GM10248 (cell line): ENCODE measurements at regions of chrX and their contacts with region 1.

Region 1: DNA sequence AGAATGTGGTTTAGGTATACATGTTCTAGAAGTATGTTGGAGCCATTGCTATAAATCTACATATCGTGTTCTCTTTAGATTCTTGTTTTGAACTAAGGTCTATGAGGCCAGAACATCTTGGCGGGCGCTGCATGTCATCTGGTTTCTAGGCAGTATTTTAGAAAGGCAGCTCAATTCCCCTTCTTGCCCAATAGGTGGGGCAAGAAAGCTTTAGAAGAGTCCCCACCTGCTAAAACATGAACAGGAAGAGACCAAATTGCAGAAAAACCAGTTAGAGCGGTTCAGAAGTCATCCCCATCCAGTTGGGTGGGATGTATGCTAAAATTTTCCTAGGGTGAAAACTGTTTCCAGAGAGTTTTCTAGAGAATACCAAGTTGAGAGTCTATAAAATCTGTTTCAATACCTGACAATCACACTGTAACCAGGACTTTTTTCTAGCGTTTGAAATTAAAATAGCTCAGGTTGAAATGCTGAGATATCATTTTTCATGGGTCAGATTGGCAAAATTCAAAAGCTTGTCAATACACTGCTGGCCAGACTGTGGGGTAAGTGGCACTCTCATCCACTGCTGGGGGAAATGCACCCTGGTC is 17.5 kb upstream of the SH3KBP1 start:
- DNase-seq: peak; percentile 62
- CTCF ChIP-seq: peak; percentile 59

Region 2: DNA sequence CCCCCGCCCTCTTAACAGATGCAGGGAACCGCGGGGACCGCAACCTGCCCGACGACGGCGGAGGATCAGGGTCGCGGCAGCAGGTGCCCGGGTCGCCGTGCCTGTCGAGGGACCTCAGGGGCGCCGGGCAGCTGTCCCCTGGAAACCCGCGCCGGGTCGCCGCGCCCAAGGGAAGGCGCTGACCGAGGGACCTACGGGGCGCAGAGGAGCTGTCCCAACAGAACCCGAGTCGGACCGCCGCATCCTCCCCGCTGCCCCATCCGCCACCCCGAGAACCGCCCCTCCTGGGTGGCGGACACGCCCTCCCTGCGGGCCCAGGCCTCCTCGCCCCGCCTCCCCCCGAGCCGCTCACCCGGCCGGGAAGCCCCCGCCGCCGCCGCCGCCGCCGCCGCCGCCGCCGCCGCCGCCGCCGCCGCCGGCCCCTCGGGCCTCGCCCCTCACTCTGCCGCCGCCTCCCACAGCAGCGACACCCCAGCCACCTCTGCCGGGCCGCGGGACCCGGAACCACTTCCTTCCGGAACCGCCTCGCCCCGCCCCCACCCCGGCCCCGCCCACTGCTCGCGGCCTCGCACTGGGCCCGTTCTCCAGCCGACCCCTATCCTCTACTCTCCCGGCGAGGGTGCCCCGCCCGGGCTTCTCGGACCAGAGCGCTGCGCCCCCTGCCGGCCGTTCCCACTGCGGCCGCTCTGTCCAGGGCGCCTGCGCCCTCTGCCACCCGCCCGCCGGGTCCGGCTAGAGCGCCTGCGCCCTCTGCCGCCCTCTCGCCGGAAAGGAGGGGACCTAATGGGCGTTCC is 85.9 kb after region 1 on chrX and contains the start of gene BCLAF3:
- CTCF ChIA-PET with region 1: interaction called, 23 read pairs
- POLR2A ChIA-PET with region 1: no interaction called
- DNase-seq: peak; percentile 92
- CTCF ChIP-seq: peak; percentile 81

Region 3: DNA sequence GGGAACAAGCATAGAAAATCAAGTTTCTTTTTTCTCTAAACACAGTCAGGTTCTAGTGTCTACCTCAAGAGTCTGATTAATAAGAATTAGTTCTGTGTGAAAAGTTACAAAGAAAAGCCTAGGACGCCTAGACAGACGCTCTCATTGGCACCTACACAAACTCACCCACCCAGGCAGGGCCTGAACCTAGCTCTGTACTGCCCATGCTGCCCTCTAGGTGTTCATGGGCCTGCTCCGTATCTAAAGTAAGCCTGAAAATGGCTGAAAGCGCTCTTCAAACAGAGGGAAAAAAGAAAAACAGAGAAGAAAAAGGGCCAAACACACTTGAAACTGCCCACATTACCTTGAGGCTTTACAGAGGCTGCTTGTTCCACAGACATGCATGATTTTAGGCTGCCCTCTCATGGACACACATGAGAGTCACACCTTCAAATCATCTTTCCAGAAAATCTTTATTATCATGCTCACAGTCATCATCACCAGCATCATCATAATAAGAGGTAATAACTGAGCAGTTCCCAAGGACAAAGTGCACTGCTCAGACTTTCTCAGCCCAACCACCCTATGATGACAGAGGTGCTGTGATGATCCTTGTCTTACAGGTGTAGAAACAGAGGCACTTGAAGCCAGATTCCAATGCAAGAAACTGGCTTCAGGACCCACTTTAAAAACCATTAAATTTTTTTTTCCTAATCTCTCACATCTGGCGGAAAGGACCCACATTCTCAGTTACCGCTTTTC is 162.3 kb after region 1 on chrX:
- CTCF ChIA-PET with region 1: interaction called, 16 read pairs
- POLR2A ChIA-PET with region 1: no interaction called
- DNase-seq: peak; percentile 61
- CTCF ChIP-seq: peak; percentile 44